ENCODE measurements at regions of chr10 and their contacts with region 1.

Region 1: GRCh38 chr10:30583778-30584415 is 45.7 kb downstream of the LYZL2 start:
- DNase-seq: no peak
- ATAC-seq: no peak
- H3K4me3 Mint-ChIP-seq: peak overlapping the region; percentile 67
- H3K27ac Mint-ChIP-seq: peak overlapping the region; percentile 31
- H3K4me1 Mint-ChIP-seq: peaks cover 49% of the 10 kb centered on the region
- H3K27me3 Mint-ChIP-seq: no peaks in the 10 kb centered on the region
- CTCF ChIP-seq: no peak

Region 2: DNA sequence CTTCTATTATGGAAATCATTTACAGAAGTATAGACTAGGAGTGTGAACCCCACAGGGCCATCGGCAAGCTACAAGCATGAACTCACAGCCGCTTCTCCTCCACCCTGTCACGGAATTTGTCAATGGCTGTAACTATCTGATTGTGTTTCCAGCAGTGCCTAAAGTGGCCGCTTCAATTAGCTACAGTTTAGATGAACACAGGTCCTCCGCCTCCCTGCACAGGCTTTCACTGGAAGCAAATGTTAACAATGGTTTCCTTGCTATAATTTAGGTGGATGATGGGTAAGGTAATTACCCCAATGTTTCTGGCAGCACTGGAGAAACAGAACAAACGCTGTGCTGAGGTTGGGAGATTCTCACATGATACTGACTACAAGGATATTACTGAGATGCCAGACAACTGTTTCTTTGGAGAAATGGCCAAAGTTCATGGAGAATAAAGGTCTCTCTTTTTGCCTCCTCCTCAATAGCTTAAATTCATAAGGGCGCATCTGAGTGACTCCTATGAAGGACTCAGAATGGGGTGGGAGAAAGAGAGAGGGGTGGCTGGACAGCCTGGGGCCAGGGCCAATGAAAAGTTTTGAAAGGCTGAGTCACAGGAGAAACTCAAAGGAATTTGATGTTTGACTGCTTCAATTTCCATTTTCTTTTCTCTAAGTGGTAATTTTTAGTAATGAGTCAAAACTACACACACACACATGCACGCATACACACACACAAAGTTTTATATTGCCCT is 1028.0 kb before region 1 on chr10:
- CTCF ChIA-PET with region 1: no interaction called
- POLR2A ChIA-PET with region 1: no interaction called
- intact Hi-C with region 1: no loop called
- DNase-seq: no peak
- ATAC-seq: no peak
- H3K4me3 Mint-ChIP-seq: no peak overlapping the region
- H3K27ac Mint-ChIP-seq: no peak overlapping the region
- H3K4me1 Mint-ChIP-seq: no peaks in the 10 kb centered on the region
- H3K27me3 Mint-ChIP-seq: no peaks in the 10 kb centered on the region
- CTCF ChIP-seq: no peak

Region 3: GRCh38 chr10:30456266-30456665 is 127.6 kb before region 1 on chr10:
- CTCF ChIA-PET with region 1: no interaction called
- POLR2A ChIA-PET with region 1: interaction called, 6 read pairs
- intact Hi-C with region 1: loop called (anchors 5 kb)
- DNase-seq: no peak
- ATAC-seq: peak; percentile 63
- H3K4me3 Mint-ChIP-seq: peak overlapping the region; percentile 53
- H3K27ac Mint-ChIP-seq: peak overlapping the region; percentile 81
- H3K4me1 Mint-ChIP-seq: peaks cover 46% of the 10 kb centered on the region
- H3K27me3 Mint-ChIP-seq: no peaks in the 10 kb centered on the region
- CTCF ChIP-seq: no peak

Region 4: GRCh38 chr10:30542001-30542894 is 41.6 kb before region 1 on chr10:
- CTCF ChIA-PET with region 1: interaction called, 6 read pairs
- POLR2A ChIA-PET with region 1: interaction called, 9 read pairs
- intact Hi-C with region 1: loop called (anchors 2 kb)
- DNase-seq: no peak
- ATAC-seq: peak; percentile 21
- H3K4me3 Mint-ChIP-seq: no peak overlapping the region
- H3K27ac Mint-ChIP-seq: peak overlapping the region; percentile 4
- H3K4me1 Mint-ChIP-seq: peaks cover 13% of the 10 kb centered on the region
- H3K27me3 Mint-ChIP-seq: no peaks in the 10 kb centered on the region
- CTCF ChIP-seq: no peak